Thyroid gland (tissue), 4 donors: ENCODE measurements at regions of chr22 and their contacts with region 1.

Region 1: DNA sequence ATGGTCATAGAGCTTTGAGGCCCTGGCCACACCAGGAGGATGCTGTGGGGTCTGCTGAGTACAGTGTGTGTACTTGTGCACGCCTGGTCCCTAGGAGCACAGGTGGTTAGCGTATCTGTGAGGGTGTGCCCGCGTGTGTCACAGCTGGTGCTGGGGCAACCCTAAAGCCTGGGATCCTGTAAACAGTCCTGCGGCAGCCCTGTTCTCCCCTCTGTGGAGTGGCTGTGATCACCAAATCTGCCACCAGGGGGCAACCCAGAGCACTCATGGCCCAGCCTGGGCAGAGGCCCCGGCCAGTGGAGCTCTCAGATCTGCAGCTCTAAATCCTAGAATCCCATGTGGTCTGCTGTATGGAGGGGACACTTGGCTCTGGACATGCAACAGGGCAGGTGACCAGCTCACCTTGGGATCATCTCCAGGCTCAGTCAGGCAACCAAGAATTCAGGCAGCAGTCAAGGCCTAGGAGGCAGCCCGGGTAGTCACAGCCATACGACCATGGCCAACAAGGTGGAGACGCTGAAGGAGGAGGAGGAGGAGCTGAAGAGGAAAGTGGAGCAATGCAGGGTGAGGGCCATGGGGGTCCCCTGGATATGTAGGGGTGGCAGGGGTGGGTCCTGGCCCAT is 3.9 kb downstream of the SH3BP1 start:
- DNase-seq: peak; percentile 84 to 87
- H3K4me3 ChIP-seq: no peak overlapping the region
- H3K27ac ChIP-seq: no peak overlapping the region
- H3K4me1 ChIP-seq: peaks cover 7 to 23% of the 10 kb centered on the region in 2 donors
- H3K27me3 ChIP-seq: no peaks in the 10 kb centered on the region
- CTCF ChIP-seq: peak; percentile 78 to 96 (median 87)
- POLR2A ChIP-seq: no peak

Region 2: GRCh38 chr22:37686002-37686982 is 43.0 kb after region 1 on chr22 and contains the start of gene NOL12:
- intact Hi-C with region 1: loop called (anchors 5 kb)
- DNase-seq: peak; percentile 75 to 76
- H3K4me3 ChIP-seq: peak within 1 kb of the TSS; percentile 62 to 93 (median 90)
- H3K27ac ChIP-seq: peak within 1 kb of the TSS; percentile 61 to 68 (median 67)
- H3K4me1 ChIP-seq: peaks cover 13 to 16% of the 10 kb centered on the region in 2 donors
- H3K27me3 ChIP-seq: no peaks in the 10 kb centered on the region
- CTCF ChIP-seq: peak in 1 of 6 experiments; percentile 19
- POLR2A ChIP-seq: peak in 1 of 2 donors; percentile 43
- total RNA-seq, gene NOL12: 18.7 to 52.6 (median 47.6) TPM